OCI-LY7 (cell line): ENCODE measurements at regions of chrX and their contacts with region 1.

Region 1: DNA sequence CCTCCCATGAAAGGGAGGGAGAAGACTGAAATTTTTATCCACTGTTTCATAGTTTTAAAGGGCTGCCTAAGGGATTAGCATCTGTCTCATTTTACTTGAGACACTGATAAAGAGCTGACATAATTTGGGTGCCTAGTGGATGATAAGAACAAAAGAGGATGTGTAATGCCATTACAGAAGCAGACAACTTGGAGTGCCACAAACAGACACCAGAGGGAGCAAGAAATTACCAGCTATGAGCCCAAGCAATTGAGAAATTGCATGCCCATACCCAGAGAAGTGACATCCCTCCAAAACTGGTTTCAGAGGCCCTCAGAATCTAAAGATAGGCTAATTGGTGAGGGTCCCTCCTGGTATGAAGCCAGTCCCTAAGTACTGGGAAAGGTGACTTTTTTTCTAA is 38.5 kb upstream of the POU3F4 start:
- DNase-seq: peak; percentile 66
- H3K4me3 ChIP-seq: peak overlapping the region; percentile 11
- H3K27ac ChIP-seq: peak overlapping the region; percentile 73
- H3K4me1 ChIP-seq: peaks cover 13% of the 10 kb centered on the region
- CTCF ChIP-seq: peak; percentile 72

Region 2: GRCh38 chrX:83333813-83334212 is 135.7 kb before region 1 on chrX:
- CTCF ChIA-PET with region 1: no interaction called
- POLR2A ChIA-PET with region 1: no interaction called
- intact Hi-C with region 1: no loop called
- DNase-seq: no peak
- H3K4me3 ChIP-seq: no peak overlapping the region
- H3K27ac ChIP-seq: no peak overlapping the region
- H3K4me1 ChIP-seq: no peaks in the 10 kb centered on the region
- CTCF ChIP-seq: no peak

Region 3: DNA sequence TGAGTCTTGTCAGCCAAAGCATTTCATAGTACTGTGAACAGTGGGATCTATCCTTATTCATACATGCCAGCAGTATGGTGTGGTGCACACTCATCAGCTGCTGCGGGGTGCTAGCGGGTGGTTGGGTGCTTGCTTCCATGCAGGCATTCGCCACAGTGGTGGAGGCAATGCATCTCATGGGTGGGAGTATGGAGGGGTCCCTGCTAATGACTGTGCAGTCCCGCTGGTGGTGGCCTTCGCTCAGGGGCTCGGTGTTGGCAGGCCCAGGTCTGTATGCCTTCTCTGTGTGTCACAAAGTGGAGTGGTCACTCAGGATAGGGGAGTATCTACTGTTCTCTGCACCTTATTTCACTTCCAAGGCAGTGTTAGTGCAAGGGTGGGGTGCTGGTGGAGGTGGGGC is 161.1 kb after region 1 on chrX:
- CTCF ChIA-PET with region 1: interaction called, 3 read pairs
- POLR2A ChIA-PET with region 1: interaction called, 11 read pairs
- intact Hi-C with region 1: loop called (anchors 1 kb)
- DNase-seq: no peak
- H3K4me3 ChIP-seq: no peak overlapping the region
- H3K27ac ChIP-seq: no peak overlapping the region
- H3K4me1 ChIP-seq: peaks cover 25% of the 10 kb centered on the region
- CTCF ChIP-seq: no peak